Kidney (tissue), 22 donors: ENCODE measurements at regions of chr7 and their contacts with region 1.

Region 1: GRCh38 chr7:100680167-100680575 is 6.6 kb downstream of the GNB2 start:
- DNase-seq: no peak
- H3K4me3 ChIP-seq: no peak overlapping the region
- H3K27ac ChIP-seq: no peak overlapping the region
- H3K4me1 ChIP-seq: peaks cover 0 to 3% (median 0%) of the 10 kb centered on the region in 3 donors
- H3K27me3 ChIP-seq: no peaks in the 10 kb centered on the region
- CTCF ChIP-seq: no peak

Region 2: GRCh38 chr7:99504603-99505323 is 1175.4 kb before region 1 on chr7 and contains the start of gene ZKSCAN5:
- intact Hi-C with region 1: no loop called
- DNase-seq: peak; percentile 98 to 99 (median 99)
- H3K4me3 ChIP-seq: peak within 1 kb of the TSS; percentile 88 to 100 (median 97)
- H3K27ac ChIP-seq: peak within 1 kb of the TSS; percentile 98
- H3K4me1 ChIP-seq: peaks cover 0 to 16% (median 9%) of the 10 kb centered on the region in 3 donors
- H3K27me3 ChIP-seq: no peaks in the 10 kb centered on the region
- CTCF ChIP-seq: peak; percentile 7
- total RNA-seq, gene ZKSCAN5: 9.1 TPM

Region 3: DNA sequence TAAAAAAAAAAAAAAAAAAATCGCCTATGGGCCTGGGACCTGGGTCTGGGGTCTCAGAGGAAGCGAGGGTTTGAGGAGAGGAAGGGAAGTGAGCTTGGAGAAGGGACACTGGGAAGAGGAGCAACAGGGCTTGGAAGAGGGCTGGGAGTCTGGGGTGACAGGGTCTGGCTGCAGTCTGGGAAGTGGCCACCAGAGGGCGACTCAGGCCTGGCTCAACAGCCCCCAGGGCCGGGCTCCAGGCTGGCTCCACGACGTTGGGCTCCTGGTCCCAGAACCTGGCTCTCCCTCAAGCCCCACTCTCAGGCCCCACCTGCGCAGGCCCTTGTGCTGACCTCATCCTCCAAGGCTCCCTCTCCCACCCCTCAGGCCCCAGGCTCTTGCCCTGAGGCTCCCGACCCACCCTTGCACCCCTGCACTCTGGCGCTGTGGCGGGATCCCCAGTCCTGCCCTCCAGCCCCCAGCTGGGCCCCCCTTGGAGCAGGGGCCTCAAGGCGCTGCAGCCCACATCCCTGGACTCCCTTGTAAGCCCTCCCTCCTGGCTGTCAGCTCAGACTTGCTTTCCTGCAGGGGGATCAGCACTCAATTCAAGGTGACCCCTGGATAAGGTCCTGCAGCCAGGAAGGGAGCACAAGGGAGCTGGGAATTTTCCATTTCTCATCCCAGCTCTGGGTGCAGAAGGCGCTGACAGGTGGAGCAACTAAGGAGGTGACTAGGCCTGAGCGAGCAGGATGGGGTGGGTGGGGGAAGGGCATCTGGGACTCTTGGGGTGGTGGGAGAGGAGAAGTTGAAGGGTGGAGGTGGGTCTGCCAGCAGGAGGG is 210.7 kb before region 1 on chr7:
- intact Hi-C with region 1: loop called (anchors 10 kb)
- DNase-seq: peak; percentile 85 to 95 (median 89)
- H3K4me3 ChIP-seq: no peak overlapping the region
- H3K27ac ChIP-seq: peak overlapping the region; percentile 60 to 65
- H3K4me1 ChIP-seq: peaks cover 0 to 13% (median 0%) of the 10 kb centered on the region in 3 donors
- H3K27me3 ChIP-seq: no peaks in the 10 kb centered on the region
- CTCF ChIP-seq: peak; percentile 95

Region 4: GRCh38 chr7:100570954-100571828 is 109.0 kb before region 1 on chr7:
- intact Hi-C with region 1: loop called (anchors 10 kb)
- DNase-seq: peak in 4 of 5 donors; percentile 62 to 83 (median 70)
- H3K4me3 ChIP-seq: no peak overlapping the region
- H3K27ac ChIP-seq: no peak overlapping the region
- H3K4me1 ChIP-seq: peaks cover 0 to 4% (median 0%) of the 10 kb centered on the region in 3 donors
- H3K27me3 ChIP-seq: no peaks in the 10 kb centered on the region
- CTCF ChIP-seq: no peak

Region 5: DNA sequence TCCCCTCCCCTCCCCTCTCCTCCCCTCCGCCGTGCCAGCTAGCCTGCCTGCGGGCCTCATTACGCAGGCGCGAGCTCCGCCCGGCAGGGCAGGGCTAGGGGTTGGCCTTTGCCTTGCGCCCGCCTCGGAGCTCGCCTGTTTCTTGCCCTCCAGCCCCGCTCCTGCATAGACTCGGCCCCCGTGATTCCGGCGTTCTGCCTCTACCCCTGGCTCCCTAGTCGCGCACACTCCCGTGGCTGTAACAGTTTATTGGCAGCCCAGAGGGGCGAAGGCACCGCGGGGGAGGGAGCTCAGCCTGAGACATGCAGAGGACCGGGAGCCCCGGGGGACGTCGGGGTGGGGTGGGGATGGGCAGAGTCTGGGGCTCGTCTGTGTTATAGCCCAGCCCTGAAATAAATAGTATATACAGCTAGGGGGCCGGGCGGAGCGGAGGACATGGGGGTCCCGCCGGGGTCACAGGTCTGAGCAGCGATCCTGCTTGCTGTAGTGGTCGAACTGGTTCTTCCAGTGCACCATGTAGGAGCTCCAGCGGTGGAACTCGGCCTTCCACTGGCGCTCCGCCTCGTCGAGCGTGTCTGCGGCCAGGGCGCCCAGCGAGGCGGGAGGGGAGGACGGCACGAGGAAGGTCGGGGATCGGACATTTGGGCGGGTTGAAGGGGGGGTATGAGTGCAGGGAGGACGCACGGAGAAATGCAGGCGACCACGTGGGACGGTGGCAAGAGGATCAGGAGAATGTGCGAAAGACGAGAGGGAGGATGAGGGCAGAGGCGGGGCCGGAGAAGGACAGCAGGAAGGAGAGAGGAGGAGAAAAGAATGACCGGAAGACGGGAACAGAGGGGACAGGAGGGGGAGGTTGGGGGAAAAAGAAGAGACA is 209.8 kb after region 1 on chr7:
- intact Hi-C with region 1: no loop called
- DNase-seq: peak; percentile 96 to 99 (median 97)
- H3K4me3 ChIP-seq: peak overlapping the region; percentile 58 to 72 (median 71)
- H3K27ac ChIP-seq: peak overlapping the region; percentile 89 to 95
- H3K4me1 ChIP-seq: peaks cover 0 to 18% (median 4%) of the 10 kb centered on the region in 3 donors
- H3K27me3 ChIP-seq: no peaks in the 10 kb centered on the region
- CTCF ChIP-seq: no peak